AG04450 (cell line): ENCODE measurements at regions of chr15 and their contacts with region 1.

Region 1: GRCh38 chr15:78422571-78423340 is 15.3 kb upstream of the IREB2 start:
- DNase-seq: peak; percentile 20
- H3K4me3 ChIP-seq: no peak overlapping the region
- H3K27ac ChIP-seq: no peak overlapping the region
- H3K27me3 ChIP-seq: peaks cover 13% of the 10 kb centered on the region
- CTCF ChIP-seq: peak; percentile 95

Region 2: GRCh38 chr15:78167227-78167888 is 255.4 kb before region 1 on chr15:
- CTCF ChIA-PET with region 1: no interaction called
- POLR2A ChIA-PET with region 1: no interaction called
- DNase-seq: no peak
- H3K4me3 ChIP-seq: no peak overlapping the region
- H3K27ac ChIP-seq: no peak overlapping the region
- H3K27me3 ChIP-seq: no peaks in the 10 kb centered on the region
- CTCF ChIP-seq: no peak

Region 3: GRCh38 chr15:78308422-78309032 is 114.2 kb before region 1 on chr15:
- CTCF ChIA-PET with region 1: interaction called, 112 read pairs
- POLR2A ChIA-PET with region 1: no interaction called
- DNase-seq: peak; percentile 33
- H3K4me3 ChIP-seq: no peak overlapping the region
- H3K27ac ChIP-seq: no peak overlapping the region
- H3K27me3 ChIP-seq: peaks cover 7% of the 10 kb centered on the region
- CTCF ChIP-seq: peak; percentile 95

Region 4: GRCh38 chr15:78396976-78397375 is 25.8 kb before region 1 on chr15:
- CTCF ChIA-PET with region 1: interaction called, 14 read pairs
- POLR2A ChIA-PET with region 1: no interaction called
- DNase-seq: no peak
- H3K4me3 ChIP-seq: no peak overlapping the region
- H3K27ac ChIP-seq: no peak overlapping the region
- H3K27me3 ChIP-seq: peaks cover 29% of the 10 kb centered on the region
- CTCF ChIP-seq: peak; percentile 25

Region 5: GRCh38 chr15:78407608-78408354 is 15.0 kb before region 1 on chr15:
- CTCF ChIA-PET with region 1: interaction called, 34 read pairs
- POLR2A ChIA-PET with region 1: no interaction called
- DNase-seq: no peak
- H3K4me3 ChIP-seq: no peak overlapping the region
- H3K27ac ChIP-seq: no peak overlapping the region
- H3K27me3 ChIP-seq: peaks cover 27% of the 10 kb centered on the region
- CTCF ChIP-seq: no peak

Region 6: GRCh38 chr15:78437762-78438302 is 15.1 kb after region 1 on chr15 and contains the start of gene IREB2:
- CTCF ChIA-PET with region 1: interaction called, 28 read pairs
- POLR2A ChIA-PET with region 1: interaction called, 3 read pairs
- DNase-seq: peak; percentile 97
- H3K4me3 ChIP-seq: peak within 1 kb of the TSS; percentile 87
- H3K27ac ChIP-seq: peak within 1 kb of the TSS; percentile 93
- H3K27me3 ChIP-seq: peaks cover 6% of the 10 kb centered on the region
- CTCF ChIP-seq: no peak
- polyA plus RNA-seq, gene IREB2: 21.5 and 30.4 TPM in 2 replicates